HEK293 (cell line): ENCODE measurements at regions of chr15 and their contacts with region 1.

Region 1: DNA sequence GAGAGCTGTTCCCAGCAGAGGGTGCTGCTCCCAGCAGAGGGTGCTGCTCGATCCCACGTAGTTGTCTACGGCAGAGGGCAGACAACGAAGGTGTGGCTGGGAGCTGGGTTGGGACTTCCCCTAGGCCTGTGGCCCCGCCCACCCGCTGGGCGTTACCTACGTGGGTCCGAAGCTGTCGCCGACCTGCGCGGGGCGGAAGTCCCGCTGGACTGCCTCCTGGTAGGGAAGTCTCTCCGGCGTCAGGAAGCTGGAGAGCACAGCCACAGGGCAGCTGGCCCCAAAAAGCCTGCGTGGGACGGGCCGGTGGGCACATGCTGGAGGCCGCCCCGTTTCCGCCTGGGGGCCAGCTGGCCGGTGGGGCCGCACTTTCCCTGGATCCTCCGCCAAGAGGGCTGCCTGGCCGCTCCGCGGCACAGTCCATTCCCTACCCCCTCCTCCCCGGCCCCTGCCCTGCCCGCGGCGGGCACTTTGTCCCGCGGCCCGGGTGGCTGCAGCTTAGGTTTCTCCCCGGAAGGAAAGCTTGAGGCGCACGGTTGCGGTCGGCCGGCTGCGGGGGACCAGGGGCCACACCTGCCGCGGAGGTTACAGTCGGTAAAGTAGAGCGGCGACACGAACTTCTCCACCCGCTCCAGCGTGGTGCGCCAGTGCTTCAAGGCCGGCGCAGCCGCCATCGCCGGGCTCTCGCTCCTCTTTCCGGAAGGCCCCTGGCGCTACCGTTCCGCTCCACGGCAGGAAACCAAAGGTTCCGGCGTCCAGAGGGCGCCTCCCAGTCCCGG is at the start of gene MAN2C1:
- H3K4me3 ChIP-seq: peak within 1 kb of the TSS; percentile 88
- H3K27ac ChIP-seq: peak within 1 kb of the TSS; percentile 81
- H3K4me1 ChIP-seq: peaks cover 8% of the 10 kb centered on the region
- CTCF ChIP-seq: peak; percentile 100

Region 2: DNA sequence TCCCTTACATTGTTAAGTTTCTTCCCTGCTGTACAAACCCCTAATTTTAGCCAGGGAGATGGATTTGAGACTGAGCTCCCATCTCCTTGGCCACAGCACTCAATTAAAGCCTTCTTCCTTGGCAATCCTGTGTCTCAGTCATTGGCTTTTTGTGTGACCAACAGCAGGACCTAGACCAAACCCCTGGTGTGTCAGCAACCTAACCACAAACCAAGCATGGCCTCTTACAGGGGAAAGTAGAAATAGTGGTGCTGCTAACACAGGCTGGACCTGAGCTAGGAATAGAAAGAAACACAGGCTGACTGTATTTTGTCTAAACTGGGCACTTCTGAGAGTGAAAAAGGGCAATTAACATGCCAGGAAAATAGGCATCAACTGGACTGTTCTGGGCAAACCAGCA is 306.8 kb before region 1 on chr15:
- CTCF ChIA-PET with region 1: no interaction called
- POLR2A ChIA-PET with region 1: no interaction called
- H3K4me3 ChIP-seq: no peak overlapping the region
- H3K27ac ChIP-seq: no peak overlapping the region
- H3K4me1 ChIP-seq: peaks cover 13% of the 10 kb centered on the region
- CTCF ChIP-seq: no peak

Region 3: DNA sequence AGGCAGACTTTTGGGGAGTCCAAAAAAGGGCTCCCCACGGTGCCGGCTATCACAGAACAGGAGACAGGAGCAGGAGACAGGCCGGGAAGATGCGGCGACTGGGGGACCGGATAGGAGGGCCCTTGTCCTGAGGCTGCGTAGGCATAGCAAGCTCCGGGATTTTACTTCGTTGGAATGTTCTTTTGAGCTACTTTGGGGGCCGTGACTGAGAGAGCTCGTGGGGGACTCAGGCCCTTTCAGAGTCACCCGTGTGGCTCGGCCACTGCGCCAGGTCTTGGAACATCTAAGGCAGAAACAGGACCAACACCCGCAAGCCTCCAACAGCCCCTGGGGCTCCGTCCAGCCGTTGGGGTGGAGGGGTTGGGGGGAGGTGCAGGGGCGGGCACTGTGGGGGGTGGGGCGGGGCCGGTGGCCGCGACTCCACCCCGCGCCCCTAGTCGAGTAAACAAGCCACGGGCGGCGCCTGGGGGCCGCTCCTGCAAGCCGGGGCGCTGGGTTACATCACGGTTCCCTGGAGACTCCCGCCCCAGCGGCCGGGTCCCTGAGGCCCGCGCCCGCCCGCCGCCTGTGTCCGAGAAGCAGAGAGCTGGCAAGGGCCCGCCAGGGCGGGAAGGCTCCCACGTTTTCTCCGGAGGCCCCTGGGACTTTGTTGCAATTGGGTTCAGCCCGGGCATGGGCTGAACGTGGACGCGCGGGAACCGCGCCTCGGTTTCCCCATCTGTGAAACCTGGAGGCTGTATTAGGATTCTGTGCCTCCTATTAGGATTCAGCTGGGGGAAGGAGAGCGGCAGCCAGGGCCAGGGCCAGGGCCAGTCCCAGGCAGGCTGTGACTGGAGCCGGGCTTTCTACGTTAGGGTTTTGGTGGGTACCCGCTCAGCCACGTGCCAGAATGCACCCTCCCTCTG is 189.7 kb before region 1 on chr15:
- CTCF ChIA-PET with region 1: no interaction called
- POLR2A ChIA-PET with region 1: no interaction called
- H3K4me3 ChIP-seq: no peak overlapping the region
- H3K27ac ChIP-seq: no peak overlapping the region
- H3K4me1 ChIP-seq: peaks cover 16% of the 10 kb centered on the region
- CTCF ChIP-seq: no peak

Region 4: DNA sequence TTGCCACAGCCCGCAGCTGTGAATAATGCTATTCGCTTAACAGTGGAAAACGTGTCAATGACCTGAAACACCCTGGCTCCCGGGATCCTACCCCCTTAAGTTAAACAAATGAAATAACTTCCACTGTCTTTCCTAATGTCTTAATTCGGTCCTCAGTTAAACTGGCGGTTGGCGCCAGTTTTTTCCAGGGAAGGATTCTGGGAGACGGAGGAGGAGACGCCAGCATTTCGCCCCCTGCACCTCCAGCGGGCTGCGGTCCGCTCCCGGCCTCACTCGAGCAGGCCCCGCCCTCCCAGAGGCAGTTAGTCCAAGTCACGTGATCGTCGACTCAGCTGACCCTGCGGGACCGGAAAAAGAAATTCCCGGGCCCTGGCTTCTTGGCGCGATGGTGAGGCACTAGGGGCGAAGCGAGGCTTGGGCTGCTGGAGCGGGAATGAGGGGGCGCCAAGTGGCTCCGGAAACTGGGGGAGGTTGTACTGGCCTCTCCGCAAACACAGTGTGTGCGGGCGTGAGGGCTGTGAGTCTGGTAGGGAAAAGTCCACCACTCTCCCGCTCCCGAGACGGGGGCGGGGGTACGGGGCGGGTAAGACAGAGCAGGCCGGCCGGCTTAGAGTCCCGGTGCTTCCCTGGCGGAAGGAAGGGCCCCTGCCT is 32.3 kb before region 1 on chr15 and contains the start of gene COMMD4:
- CTCF ChIA-PET with region 1: interaction called, 8 read pairs
- POLR2A ChIA-PET with region 1: interaction called, 15 read pairs
- H3K4me3 ChIP-seq: peak within 1 kb of the TSS; percentile 87
- H3K27ac ChIP-seq: peak within 1 kb of the TSS; percentile 14; the same call in 1 of the 2 replicates
- H3K4me1 ChIP-seq: peaks cover 6% of the 10 kb centered on the region; the same call in 1 of the 2 replicates
- CTCF ChIP-seq: peak; percentile 78; the same call in 1 of the 2 replicates

Region 5: GRCh38 chr15:75397494-75397893 is 29.4 kb after region 1 on chr15:
- CTCF ChIA-PET with region 1: interaction called, 10 read pairs
- POLR2A ChIA-PET with region 1: interaction called, 3 read pairs
- H3K4me3 ChIP-seq: no peak overlapping the region
- H3K27ac ChIP-seq: no peak overlapping the region
- H3K4me1 ChIP-seq: no peaks in the 10 kb centered on the region
- CTCF ChIP-seq: no peak

Region 6: GRCh38 chr15:75453703-75454470 is 85.8 kb after region 1 on chr15:
- CTCF ChIA-PET with region 1: interaction called, 63 read pairs
- POLR2A ChIA-PET with region 1: interaction called, 242 read pairs
- H3K4me3 ChIP-seq: peak overlapping the region; percentile 70
- H3K27ac ChIP-seq: peak overlapping the region; percentile 87
- H3K4me1 ChIP-seq: peaks cover 15% of the 10 kb centered on the region
- CTCF ChIP-seq: no peak

Region 7: GRCh38 chr15:75542386-75542797 is 174.3 kb after region 1 on chr15:
- CTCF ChIA-PET with region 1: no interaction called
- POLR2A ChIA-PET with region 1: no interaction called
- H3K4me3 ChIP-seq: no peak overlapping the region
- H3K27ac ChIP-seq: no peak overlapping the region
- H3K4me1 ChIP-seq: peaks cover 23% of the 10 kb centered on the region
- CTCF ChIP-seq: no peak

Region 8: DNA sequence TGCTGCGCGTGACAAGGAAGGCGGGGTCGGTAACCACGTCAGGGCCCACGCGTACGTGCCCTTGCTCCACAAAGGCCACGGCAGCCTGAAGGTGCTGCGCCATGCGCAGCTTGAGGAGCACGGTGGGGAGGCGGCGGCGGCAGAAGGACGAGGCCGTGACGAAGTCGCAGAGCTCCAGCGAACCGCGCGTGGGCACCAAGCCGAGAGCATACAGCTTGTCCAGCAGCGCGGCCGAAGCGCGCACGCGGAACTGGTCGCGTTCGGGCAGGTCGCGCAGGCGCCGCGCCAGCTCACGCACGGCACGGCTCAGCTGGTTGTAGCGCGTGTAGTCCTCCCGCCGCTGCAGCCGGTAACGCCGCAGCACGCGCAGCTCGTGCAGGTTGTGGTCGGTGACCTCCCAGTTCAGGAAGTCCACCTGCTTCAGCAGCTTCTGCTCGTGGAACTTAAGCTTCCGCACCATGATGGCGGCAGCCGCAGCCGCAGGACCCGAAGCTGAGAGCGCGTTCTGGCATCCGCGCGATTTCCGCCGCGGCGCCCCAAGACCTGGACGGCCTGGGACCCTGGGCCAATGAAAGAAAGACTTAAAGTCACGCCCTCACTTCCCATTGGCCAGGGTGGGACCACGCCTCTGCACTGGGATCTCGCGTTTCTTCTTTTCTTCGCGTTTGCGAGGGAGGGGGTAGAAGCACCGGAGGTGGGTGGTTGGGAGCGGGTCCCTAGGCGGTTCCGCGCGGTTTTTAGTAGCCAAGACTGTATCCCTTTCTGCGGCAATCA is 271.8 kb after region 1 on chr15 and contains the start of gene IMP3:
- CTCF ChIA-PET with region 1: interaction called, 47 read pairs
- POLR2A ChIA-PET with region 1: interaction called, 54 read pairs
- H3K4me3 ChIP-seq: peak within 1 kb of the TSS; percentile 58
- H3K27ac ChIP-seq: peak within 1 kb of the TSS; percentile 94
- H3K4me1 ChIP-seq: peaks cover 7% of the 10 kb centered on the region
- CTCF ChIP-seq: peak; percentile 63

Region 9: DNA sequence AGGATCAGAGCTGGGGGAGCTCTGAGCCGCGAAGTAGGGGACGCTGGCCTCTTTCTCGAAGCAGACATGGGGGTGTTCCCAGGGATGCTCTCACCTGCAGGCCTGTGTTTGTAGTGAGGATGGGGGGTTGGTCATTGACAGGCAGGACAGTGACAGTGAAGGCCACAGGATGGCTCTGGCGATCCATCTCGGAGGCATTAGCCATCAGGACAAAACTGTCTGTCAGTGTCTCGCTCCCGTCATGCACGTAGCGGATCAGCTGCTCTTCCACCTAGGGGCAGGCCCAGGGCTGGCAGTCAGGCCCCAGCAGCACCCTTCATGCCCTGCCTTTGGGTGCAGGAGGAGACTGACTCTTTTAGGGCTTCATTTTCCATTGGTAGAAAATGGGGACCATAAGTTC is 316.5 kb after region 1 on chr15:
- CTCF ChIA-PET with region 1: interaction called, 66 read pairs
- POLR2A ChIA-PET with region 1: interaction called, 7 read pairs
- H3K4me3 ChIP-seq: no peak overlapping the region
- H3K27ac ChIP-seq: no peak overlapping the region
- H3K4me1 ChIP-seq: no peaks in the 10 kb centered on the region
- CTCF ChIP-seq: peak; percentile 46; the same call in 1 of the 2 replicates

Region 10: DNA sequence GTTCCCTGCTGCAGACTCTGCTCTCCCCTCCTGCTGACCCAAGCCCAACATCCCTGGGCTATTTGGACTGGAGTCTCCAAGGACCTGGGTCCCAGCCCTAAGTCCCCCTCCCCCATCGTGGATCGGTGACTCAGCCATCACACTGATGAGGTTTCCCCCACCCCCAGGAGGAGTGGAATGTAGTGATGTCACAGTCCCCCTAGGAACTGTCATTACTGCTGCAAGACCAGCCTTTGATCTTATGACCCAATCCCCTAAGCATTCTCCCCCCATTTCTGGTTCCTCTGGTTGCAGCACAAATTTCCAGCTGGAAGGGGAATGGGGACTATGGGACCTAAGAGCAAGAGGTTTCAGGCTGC is 407.9 kb after region 1 on chr15:
- CTCF ChIA-PET with region 1: no interaction called
- POLR2A ChIA-PET with region 1: no interaction called
- H3K4me3 ChIP-seq: no peak overlapping the region
- H3K27ac ChIP-seq: no peak overlapping the region
- H3K4me1 ChIP-seq: peaks cover 6% of the 10 kb centered on the region; the same call in 1 of the 2 replicates
- CTCF ChIP-seq: no peak